Calu3 (cell line): ENCODE measurements at regions of chr1 and their contacts with region 1.

Region 1: GRCh38 chr1:61043010-61043820 is 39.1 kb upstream of the NFIA start:
- DNase-seq: peak; percentile 94
- H3K4me3 Mint-ChIP-seq: peak overlapping the region; percentile 74
- H3K27ac Mint-ChIP-seq: no peak overlapping the region
- H3K4me1 Mint-ChIP-seq: no peaks in the 10 kb centered on the region
- H3K27me3 Mint-ChIP-seq: no peaks in the 10 kb centered on the region
- CTCF ChIP-seq: peak; percentile 87

Region 2: DNA sequence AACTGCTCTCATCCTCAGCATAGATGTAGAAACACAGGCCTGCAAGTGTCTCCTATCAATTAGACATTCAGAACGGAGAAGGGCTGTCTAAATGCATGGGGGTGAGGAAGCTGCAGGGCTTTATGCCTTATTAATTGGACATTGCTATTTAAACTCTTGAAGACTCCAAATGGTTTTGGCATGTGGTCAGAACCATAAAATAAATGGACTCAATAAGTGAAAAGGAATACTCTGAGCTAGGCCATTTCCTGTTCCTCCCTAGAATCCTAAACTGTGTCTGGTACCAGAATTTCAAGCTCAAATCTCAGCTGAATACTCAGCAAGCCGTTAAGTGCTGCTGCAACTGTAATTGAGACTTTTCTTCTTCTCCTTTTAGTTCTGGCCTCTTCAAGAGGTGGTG is 889.3 kb before region 1 on chr1:
- CTCF ChIA-PET with region 1: no interaction called
- intact Hi-C with region 1: loop called (anchors 5 kb)
- DNase-seq: no peak
- H3K4me3 Mint-ChIP-seq: no peak overlapping the region
- H3K27ac Mint-ChIP-seq: no peak overlapping the region
- H3K4me1 Mint-ChIP-seq: no peaks in the 10 kb centered on the region
- H3K27me3 Mint-ChIP-seq: no peaks in the 10 kb centered on the region
- CTCF ChIP-seq: no peak

Region 3: DNA sequence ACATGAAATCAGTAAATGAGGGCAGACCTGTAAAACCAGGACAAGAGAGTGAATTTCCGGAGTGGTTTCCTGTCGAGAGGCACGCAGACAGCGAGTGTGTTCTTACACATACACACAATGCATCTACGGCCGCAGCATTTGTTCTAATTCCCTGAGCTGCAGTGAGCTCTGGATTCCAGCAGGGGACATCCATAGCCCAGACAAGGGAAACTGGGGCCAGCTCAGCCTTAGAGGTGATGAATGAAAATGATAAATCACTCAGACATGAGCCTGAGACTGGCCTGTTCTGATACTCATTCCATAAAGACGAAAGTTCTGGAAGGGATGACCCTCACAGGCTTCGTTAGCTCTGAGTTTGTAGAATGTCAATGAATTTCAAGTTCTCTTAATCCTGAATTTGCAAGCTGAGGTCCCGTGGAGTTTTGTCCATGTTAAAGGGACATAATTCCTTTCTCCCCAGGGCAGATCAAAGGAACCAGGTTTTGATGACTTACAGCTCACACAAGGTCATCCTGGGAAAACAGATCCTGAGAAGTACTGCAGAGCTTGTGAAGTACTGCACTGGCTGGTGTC is 761.8 kb before region 1 on chr1:
- CTCF ChIA-PET with region 1: interaction called, 14 read pairs
- intact Hi-C with region 1: loop called (anchors 2 kb)
- DNase-seq: peak; percentile 66
- H3K4me3 Mint-ChIP-seq: no peak overlapping the region
- H3K27ac Mint-ChIP-seq: peak overlapping the region; percentile 30
- H3K4me1 Mint-ChIP-seq: peaks cover 22% of the 10 kb centered on the region
- H3K27me3 Mint-ChIP-seq: no peaks in the 10 kb centered on the region
- CTCF ChIP-seq: peak; percentile 79

Region 4: DNA sequence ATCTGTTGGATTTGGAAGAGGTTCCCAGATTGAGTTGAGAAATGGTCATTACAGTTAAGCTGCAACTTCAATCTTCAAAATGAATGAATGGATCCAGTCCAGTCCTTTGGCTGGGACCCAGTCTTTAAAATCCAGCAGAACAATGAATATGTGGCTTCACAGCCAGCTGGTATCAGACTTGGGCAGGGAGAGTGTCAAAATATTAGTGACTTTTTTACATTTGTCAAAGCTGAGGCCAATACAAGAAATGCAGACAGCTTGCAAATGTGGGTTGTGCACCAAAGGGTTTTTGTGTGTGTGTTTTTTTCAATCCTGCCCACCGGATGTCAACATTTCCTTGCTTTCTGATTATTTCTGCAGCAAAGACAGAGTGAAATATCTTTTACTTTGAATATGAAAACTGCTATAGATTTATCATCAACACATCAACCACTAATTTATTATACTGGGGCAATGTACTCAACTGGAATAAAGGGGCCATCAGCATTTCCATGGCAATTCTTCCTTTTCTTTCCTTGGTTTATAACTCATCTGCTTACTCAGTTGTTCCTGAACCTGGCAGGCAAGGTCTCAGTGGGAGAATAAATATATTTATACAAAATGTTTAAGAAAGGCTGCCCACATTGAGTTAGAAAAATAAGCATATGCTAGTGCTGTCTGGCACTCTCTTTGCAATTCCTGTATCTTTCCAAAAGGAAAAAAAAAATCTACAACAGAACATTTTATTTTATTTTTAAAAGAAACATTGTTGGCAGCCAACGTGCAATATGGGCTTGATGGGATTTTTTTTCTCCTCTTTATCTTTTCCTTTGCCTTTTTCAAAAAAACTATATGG is 478.1 kb before region 1 on chr1:
- CTCF ChIA-PET with region 1: no interaction called
- intact Hi-C with region 1: loop called (anchors 5 kb)
- DNase-seq: no peak
- H3K4me3 Mint-ChIP-seq: no peak overlapping the region
- H3K27ac Mint-ChIP-seq: no peak overlapping the region
- H3K4me1 Mint-ChIP-seq: peaks cover 29% of the 10 kb centered on the region
- H3K27me3 Mint-ChIP-seq: no peaks in the 10 kb centered on the region
- CTCF ChIP-seq: no peak

Region 5: GRCh38 chr1:60848583-60849188 is 194.5 kb before region 1 on chr1:
- CTCF ChIA-PET with region 1: interaction called, 5 read pairs
- intact Hi-C with region 1: loop called (anchors 2 kb)
- DNase-seq: no peak
- H3K4me3 Mint-ChIP-seq: no peak overlapping the region
- H3K27ac Mint-ChIP-seq: peak overlapping the region; percentile 49
- H3K4me1 Mint-ChIP-seq: peaks cover 20% of the 10 kb centered on the region
- H3K27me3 Mint-ChIP-seq: no peaks in the 10 kb centered on the region
- CTCF ChIP-seq: peak; percentile 60

Region 6: DNA sequence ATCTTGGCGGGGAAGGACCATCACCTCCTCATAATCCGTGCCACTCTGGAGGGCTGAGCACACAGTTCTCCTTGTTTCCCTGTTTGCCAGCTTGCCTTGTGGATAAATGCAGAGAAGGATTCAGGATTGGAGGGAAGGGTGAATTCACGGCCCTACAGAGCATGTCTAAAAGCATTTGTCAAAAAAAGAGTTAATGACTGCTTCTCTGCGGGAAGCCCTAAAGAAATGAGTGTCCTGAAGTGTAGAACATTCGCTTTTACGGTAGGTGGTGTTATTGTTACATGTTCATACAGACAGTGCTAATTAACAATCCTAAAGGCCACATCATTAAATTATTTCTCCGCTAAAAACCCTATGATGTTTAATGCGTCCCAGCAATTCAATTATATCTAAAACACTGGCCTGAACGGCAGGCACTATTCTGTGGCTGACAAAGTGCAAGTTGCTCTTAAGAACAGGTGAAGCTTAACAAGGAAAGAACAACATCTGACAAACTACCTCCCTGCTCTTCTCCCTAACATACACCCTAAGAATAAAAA is 73.2 kb before region 1 on chr1:
- CTCF ChIA-PET with region 1: interaction called, 4 read pairs
- intact Hi-C with region 1: loop called (anchors 2 kb)
- DNase-seq: no peak
- H3K4me3 Mint-ChIP-seq: no peak overlapping the region
- H3K27ac Mint-ChIP-seq: no peak overlapping the region
- H3K4me1 Mint-ChIP-seq: peaks cover 28% of the 10 kb centered on the region
- H3K27me3 Mint-ChIP-seq: peaks cover 11% of the 10 kb centered on the region
- CTCF ChIP-seq: no peak

Region 7: GRCh38 chr1:60978421-60979357 is 64.5 kb before region 1 on chr1:
- CTCF ChIA-PET with region 1: interaction called, 9 read pairs
- intact Hi-C with region 1: loop called (anchors 2 kb)
- DNase-seq: peak; percentile 66
- H3K4me3 Mint-ChIP-seq: no peak overlapping the region
- H3K27ac Mint-ChIP-seq: no peak overlapping the region
- H3K4me1 Mint-ChIP-seq: no peaks in the 10 kb centered on the region
- H3K27me3 Mint-ChIP-seq: no peaks in the 10 kb centered on the region
- CTCF ChIP-seq: peak; percentile 57